K562 (cell line): ENCODE measurements at regions of chr2 and their contacts with region 1.

Region 1: DNA sequence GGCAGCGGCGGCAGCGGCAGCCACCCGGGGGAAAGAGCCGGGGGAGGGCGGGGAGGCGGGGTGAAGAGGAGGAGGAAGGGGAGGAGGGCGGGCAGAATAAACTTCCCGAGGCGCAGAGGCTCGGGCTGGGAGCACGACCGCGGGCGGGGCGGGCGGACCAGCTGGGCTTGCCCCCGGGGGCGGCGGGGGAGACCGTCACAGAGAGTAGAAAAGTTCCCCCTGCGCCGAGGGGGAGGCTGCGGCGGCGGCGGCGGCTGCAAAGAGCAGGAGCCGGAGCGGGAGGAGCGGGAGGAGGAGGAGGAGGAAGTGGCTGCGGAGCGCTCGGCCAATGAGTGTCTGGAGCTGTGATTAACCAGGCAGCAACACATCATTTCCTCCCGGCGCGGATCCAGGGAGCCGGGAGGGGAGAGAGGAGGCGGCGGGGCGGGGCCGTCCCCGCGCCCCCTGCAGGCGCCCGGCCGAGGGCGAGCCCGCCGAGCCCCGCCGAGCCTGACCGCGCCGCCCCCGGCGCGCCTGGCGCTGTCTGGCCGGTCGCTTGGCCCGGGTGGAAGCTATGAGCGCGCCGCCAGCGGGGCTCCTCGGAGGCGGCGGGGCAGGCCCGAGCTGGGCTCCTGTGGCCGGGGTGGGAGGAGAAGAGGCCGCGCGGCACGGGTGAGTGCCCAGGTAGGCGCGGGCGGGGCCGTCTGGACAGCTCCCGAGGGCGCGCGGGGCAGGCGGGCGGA is at the start of gene ACVR1:
- DNase-seq: peak; percentile 93 to 98 (median 94)
- ATAC-seq: peak; percentile 90
- H3K4me3 ChIP-seq: peak within 1 kb of the TSS; percentile 67
- H3K27ac ChIP-seq: peak within 1 kb of the TSS; percentile 73
- H3K4me1 ChIP-seq: peaks cover 8 to 19% of the 10 kb centered on the region in 2 experiments
- H3K27me3 ChIP-seq: no peaks in the 10 kb centered on the region
- CTCF ChIP-seq: peak; percentile 27 to 54 (median 42); a peak in 5 of 6 replicates
- EP300 ChIP-seq: peak; percentile 38; the same call in 1 of the 2 replicates
- POLR2A ChIP-seq: peak; percentile 80
- RAD21 ChIP-seq: peak in 1 of 2 experiments; percentile 54; a peak in 2 of 4 replicates
- polyA plus RNA-seq, gene ACVR1: 4.7 to 7.9 TPM

Region 2: GRCh38 chr2:157696036-157696435 is 180.2 kb before region 1 on chr2:
- CTCF ChIA-PET with region 1: no interaction called
- POLR2A ChIA-PET with region 1: no interaction called
- in situ Hi-C with region 1: no loop called
- intact Hi-C with region 1: no loop called
- DNase-seq: no peak
- ATAC-seq: no peak
- H3K4me3 ChIP-seq: no peak overlapping the region
- H3K27ac ChIP-seq: no peak overlapping the region
- H3K4me1 ChIP-seq: no peaks in the 10 kb centered on the region
- H3K27me3 ChIP-seq: no peaks in the 10 kb centered on the region; a peak in 1 of 5 replicates
- CTCF ChIP-seq: no peak
- EP300 ChIP-seq: no peak
- POLR2A ChIP-seq: no peak
- RAD21 ChIP-seq: no peak

Region 3: DNA sequence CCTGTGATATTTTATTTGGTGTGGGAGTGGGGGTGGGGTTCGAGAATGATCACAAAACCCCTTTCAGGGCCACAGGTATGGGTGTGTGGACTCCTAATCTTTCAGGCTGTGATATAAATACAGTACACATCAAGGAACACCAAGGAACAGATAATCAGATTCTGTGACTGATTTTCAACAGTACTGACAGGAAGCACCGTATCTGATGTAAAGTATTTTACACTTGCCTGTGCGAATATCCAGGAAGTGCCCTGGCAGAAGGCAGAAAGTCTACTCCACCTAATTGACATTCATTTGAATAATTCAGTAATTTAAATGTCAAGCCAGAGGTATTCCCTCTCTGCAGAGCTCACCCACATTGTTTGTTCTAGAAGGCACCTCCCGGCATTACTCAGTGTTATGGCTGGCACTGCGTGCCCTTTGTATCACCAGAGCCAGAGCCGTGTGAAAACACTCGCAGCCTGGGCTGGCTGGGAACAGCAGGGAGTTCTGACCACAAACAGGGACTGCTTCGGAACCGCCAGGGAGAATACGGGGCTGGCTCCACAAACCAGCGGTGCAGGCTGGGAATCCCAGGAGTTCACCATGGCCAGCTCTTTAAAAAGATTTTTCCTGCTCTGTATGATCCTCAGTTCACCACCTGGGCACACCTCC is 91.9 kb before region 1 on chr2:
- CTCF ChIA-PET with region 1: no interaction called
- POLR2A ChIA-PET with region 1: interaction called, 4 read pairs
- in situ Hi-C with region 1: no loop called
- intact Hi-C with region 1: loop called (anchors 1 kb)
- DNase-seq: peak in 2 of 4 experiments; percentile 24 to 29
- ATAC-seq: no peak
- H3K4me3 ChIP-seq: no peak overlapping the region
- H3K27ac ChIP-seq: peak overlapping the region; percentile 37; the same call in 2 of the 3 replicates
- H3K4me1 ChIP-seq: peaks cover 22 to 66% of the 10 kb centered on the region in 2 experiments
- H3K27me3 ChIP-seq: no peaks in the 10 kb centered on the region
- CTCF ChIP-seq: no peak
- EP300 ChIP-seq: peak; percentile 76
- POLR2A ChIP-seq: no peak
- RAD21 ChIP-seq: 0 out of 4 replicates have a peak, but pooled peaks of 1 of the 2 experiments have one; percentile 3

Region 4: DNA sequence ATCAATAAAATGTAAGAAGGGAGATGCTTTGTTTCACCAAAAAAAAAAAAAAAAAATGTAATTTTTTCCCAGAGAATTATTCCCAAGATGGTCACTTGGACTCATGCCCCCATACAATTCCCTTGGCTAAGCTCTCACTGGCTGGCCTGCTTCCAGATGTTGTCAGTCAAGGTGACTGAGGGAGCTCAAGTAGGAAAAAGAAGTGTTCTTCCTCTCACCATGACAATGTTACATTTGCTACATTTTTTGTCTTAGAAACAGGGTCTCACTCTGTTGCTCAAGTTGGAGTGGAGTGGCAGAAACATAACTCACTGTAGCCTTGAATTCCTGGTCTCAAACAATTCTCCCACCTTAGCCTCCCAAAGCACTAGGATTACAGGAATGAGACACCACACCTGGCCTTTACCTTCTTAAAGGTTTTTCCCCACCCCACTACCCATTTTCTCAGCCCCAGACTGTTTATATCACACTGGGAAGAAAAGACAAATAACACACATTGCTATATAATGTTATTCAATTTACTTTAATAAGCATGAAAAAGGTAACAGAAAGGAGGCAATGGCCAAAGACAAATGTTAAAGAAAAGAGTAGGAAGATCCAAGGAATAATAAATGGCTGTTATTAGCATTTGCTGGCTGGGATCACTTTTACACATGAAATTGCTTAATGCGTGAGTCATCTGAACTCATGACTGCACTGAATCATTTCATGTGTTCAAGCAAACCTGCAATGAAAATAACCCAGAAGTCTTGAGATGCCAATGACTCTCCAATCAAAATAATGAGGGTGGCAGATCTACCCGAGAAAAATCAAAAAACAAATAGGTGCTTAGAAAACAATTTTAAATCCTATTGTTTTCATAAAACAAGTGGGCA is 45.3 kb before region 1 on chr2:
- CTCF ChIA-PET with region 1: no interaction called
- POLR2A ChIA-PET with region 1: no interaction called
- in situ Hi-C with region 1: no loop called
- intact Hi-C with region 1: no loop called
- DNase-seq: no peak
- ATAC-seq: no peak
- H3K4me3 ChIP-seq: no peak overlapping the region
- H3K27ac ChIP-seq: peak overlapping the region; percentile 10; the same call in 1 of the 3 replicates
- H3K4me1 ChIP-seq: peaks cover 0 to 6% of the 10 kb centered on the region in 2 experiments; a peak in 3 of 5 replicates
- H3K27me3 ChIP-seq: no peaks in the 10 kb centered on the region
- CTCF ChIP-seq: no peak
- EP300 ChIP-seq: no peak
- POLR2A ChIP-seq: no peak
- RAD21 ChIP-seq: no peak

Region 5: DNA sequence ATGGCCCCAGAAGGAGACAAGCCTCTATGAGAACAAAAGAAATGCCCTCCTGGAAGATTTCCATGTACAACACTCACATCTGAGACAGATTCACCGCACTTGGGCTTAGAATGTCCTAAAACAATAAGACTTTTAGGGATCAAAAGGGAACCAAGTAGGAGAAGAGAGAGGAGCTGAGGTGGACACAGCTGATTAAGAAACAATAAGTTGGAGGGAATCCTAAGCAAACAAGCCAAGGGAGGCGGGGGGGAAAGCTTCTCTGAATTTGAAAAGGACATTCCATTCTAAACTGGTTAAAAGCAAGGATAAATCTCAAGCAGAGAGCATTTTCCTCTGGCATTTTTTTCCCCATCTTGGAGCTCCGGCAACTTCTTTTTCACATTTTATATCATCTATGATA is 10.0 kb before region 1 on chr2:
- CTCF ChIA-PET with region 1: no interaction called
- POLR2A ChIA-PET with region 1: interaction called, 16 read pairs
- in situ Hi-C with region 1: no loop called
- intact Hi-C with region 1: no loop called
- DNase-seq: no peak
- ATAC-seq: no peak
- H3K4me3 ChIP-seq: no peak overlapping the region
- H3K27ac ChIP-seq: no peak overlapping the region
- H3K4me1 ChIP-seq: peaks cover 0 to 4% of the 10 kb centered on the region in 2 experiments; a peak in 1 of 5 replicates
- H3K27me3 ChIP-seq: no peaks in the 10 kb centered on the region
- CTCF ChIP-seq: no peak
- EP300 ChIP-seq: no peak
- POLR2A ChIP-seq: no peak
- RAD21 ChIP-seq: no peak

Region 6: GRCh38 chr2:157929871-157930667 is 53.8 kb after region 1 on chr2:
- CTCF ChIA-PET with region 1: no interaction called
- POLR2A ChIA-PET with region 1: no interaction called
- in situ Hi-C with region 1: no loop called
- intact Hi-C with region 1: loop called (anchors 2 kb)
- DNase-seq: peak; percentile 41 to 93 (median 58)
- ATAC-seq: peak; percentile 93
- H3K4me3 ChIP-seq: no peak overlapping the region
- H3K27ac ChIP-seq: peak overlapping the region; percentile 80
- H3K4me1 ChIP-seq: peaks cover 10 to 82% of the 10 kb centered on the region in 2 experiments
- H3K27me3 ChIP-seq: no peaks in the 10 kb centered on the region
- CTCF ChIP-seq: no peak; a peak in 1 of 6 replicates
- EP300 ChIP-seq: peak; percentile 100
- POLR2A ChIP-seq: no peak
- RAD21 ChIP-seq: peak; percentile 44 to 54; a peak in 3 of 4 replicates